ENCODE measurements at regions of chr4 and their contacts with region 1.

Region 1: DNA sequence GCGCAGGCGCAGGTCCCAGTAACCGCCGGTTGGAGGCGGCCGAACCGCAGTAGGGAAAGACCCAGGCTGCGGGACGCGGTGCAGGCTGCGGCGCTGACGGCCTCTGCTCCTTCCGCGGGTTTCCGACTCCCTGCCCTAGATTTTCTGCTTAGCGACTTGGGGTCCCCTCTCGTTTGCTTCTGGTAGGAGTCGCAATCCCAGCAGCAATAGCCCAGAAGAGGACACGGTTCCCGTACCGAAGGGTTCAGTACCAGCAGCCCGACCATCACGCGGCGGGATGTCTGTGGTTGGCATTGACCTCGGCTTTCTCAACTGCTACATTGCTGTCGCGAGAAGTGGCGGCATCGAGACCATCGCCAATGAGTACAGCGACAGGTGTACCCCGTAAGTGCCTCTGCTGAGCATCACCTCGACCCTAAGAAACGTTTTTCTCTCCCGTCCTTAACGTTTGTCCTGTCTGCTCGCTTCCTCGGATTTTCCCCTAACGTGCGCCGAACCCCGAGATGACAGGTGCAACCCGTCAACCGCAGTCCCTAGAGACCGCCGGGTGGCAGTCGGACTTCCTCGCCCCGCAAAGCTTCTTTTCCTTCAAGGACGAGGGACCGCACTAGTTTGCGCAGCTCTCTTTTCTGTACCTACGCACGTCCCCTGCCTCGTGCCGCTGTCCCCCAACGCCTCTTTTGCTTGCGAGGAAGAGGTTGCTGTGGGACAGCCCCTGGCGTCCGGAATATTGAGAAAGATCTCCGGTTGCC is at the start of gene HSPA4L:
- DNase-seq: peak; percentile 48 to 77 (median 66)
- H3K4me3 ChIP-seq: peak within 1 kb of the TSS; percentile 68 to 94 (median 82)
- H3K27ac ChIP-seq: peak within 1 kb of the TSS; percentile 11 to 97 (median 89)
- H3K27me3 ChIP-seq: no peaks in the 10 kb centered on the region
- CTCF ChIP-seq: peak in 42 of 56 donors; percentile 4 to 59 (median 34)
- total RNA-seq, gene HSPA4L: 22.6 to 133 (median 58.3) TPM

Region 2: GRCh38 chr4:127634181-127634580 is 148.3 kb before region 1 on chr4:
- intact Hi-C with region 1: no loop called
- DNase-seq: no peak
- H3K4me3 ChIP-seq: peak overlapping the region in 40 of 59 donors; percentile 0 to 88 (median 78)
- H3K27ac ChIP-seq: no peak overlapping the region
- H3K27me3 ChIP-seq: no peaks in the 10 kb centered on the region
- CTCF ChIP-seq: no peak

Region 3: DNA sequence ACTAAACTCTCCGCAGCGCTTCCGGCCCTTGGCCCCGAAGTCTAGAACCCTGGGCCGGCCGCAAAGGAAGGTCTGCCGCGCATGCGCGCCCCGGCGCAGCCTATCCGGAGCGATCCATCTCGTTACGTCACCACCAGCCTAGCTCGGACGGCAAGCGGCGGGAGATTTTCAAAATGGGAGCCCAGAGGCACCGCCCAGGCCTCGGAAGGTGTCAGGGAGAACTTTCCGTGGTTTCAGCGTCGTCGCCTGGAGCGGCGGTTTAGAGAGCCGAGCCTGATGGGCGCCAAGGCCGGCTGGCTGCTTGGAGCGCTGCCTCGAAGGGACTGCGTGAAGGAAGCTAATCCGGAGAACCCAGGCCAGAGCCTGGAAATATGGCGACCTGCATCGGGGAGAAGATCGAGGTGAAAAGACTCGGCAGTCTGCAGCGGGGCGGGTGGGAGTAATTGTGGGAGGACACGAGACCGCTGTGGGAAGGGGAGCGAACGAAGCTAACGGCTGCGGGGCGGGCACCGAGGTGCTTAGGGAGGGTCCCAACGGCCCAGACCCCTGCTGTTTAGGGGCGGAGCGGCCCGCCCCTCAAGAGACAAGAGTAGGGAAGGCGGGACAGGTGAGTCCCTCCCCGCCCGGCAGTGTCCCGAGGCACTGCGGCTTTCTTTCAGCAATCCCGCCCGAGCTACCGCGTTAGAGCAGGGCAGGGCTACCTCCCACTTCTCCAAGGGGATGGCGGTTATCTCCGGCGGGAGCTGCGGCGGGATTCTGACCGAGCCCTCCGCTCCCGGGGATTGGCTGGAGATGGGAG is 98.5 kb after region 1 on chr4 and contains the start of gene PLK4:
- intact Hi-C with region 1: loop called (anchors 5 to 10 kb)
- DNase-seq: peak; percentile 85 to 96 (median 90)
- H3K4me3 ChIP-seq: peak within 1 kb of the TSS; percentile 56 to 97 (median 85)
- H3K27ac ChIP-seq: peak within 1 kb of the TSS in 46 of 59 donors; percentile 10 to 85 (median 62)
- H3K27me3 ChIP-seq: no peaks in the 10 kb centered on the region
- CTCF ChIP-seq: peak in 8 of 56 donors; percentile 10 to 32 (median 17)
- total RNA-seq, gene PLK4: 0.57 to 6.0 (median 2.2) TPM

Region 4: GRCh38 chr4:127965062-127965802 is 182.8 kb after region 1 on chr4 and contains the starts of genes ABHD18 and MFSD8:
- intact Hi-C with region 1: loop called (anchors 10 kb)
- DNase-seq: peak; percentile 84 to 97 (median 94)
- H3K4me3 ChIP-seq: peak within 1 kb of the TSS; percentile 69 to 99 (median 93)
- H3K27ac ChIP-seq: peak within 1 kb of the TSS; percentile 42 to 96 (median 87)
- H3K27me3 ChIP-seq: no peaks in the 10 kb centered on the region
- CTCF ChIP-seq: peak in 35 of 56 donors; percentile 4 to 53 (median 28)
- total RNA-seq, gene ABHD18: 9.0 to 22.8 (median 15.7) TPM
- total RNA-seq, gene MFSD8: 12.6 to 42.3 (median 25.9) TPM

Region 5: DNA sequence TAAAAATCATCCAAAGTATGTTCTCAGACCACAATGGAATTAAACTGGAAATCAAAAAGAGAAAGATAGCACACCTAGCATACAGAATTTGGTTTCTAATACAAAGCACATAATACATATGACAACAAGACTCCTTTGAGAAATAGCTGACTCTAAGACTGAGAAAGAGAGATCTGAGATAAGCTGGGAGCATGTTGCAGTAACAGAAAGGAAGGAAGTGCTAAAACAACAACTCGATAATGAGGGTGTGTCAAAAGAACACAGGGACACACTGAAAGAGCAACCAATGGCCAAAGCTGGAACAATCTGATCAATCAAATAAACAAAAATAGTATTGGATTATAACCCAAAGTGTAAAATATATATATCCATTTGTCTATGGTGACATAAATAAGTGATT is 1900.1 kb after region 1 on chr4:
- intact Hi-C with region 1: no loop called
- DNase-seq: no peak
- H3K4me3 ChIP-seq: no peak overlapping the region
- H3K27ac ChIP-seq: no peak overlapping the region
- H3K27me3 ChIP-seq: no peaks in the 10 kb centered on the region
- CTCF ChIP-seq: no peak